Activated CD4-positive, alpha-beta T cell treated with anti-CD3 and anti-CD28 coated beads, Interleukin-2, amount 10 ng/mL, durations not matched to agents 24 days and 14 days (primary cell): ENCODE measurements at regions of chr9 and their contacts with region 1.

Region 1: GRCh38 chr9:2638871-2639673 is 17.5 kb downstream of the VLDLR start:
- DNase-seq: no peak
- H3K4me3 Mint-ChIP-seq: no peak overlapping the region
- H3K27ac Mint-ChIP-seq: peak overlapping the region; percentile 79
- H3K4me1 Mint-ChIP-seq: peaks cover 12% of the 10 kb centered on the region
- H3K27me3 Mint-ChIP-seq: no peaks in the 10 kb centered on the region

Region 2: GRCh38 chr9:2655411-2655901 is 16.4 kb after region 1 on chr9:
- intact Hi-C with region 1: loop called (anchors 1 kb)
- DNase-seq: peak; percentile 83
- H3K4me3 Mint-ChIP-seq: peak overlapping the region; percentile 53
- H3K27ac Mint-ChIP-seq: peak overlapping the region; percentile 94
- H3K4me1 Mint-ChIP-seq: peaks cover 20% of the 10 kb centered on the region
- H3K27me3 Mint-ChIP-seq: no peaks in the 10 kb centered on the region

Region 3: DNA sequence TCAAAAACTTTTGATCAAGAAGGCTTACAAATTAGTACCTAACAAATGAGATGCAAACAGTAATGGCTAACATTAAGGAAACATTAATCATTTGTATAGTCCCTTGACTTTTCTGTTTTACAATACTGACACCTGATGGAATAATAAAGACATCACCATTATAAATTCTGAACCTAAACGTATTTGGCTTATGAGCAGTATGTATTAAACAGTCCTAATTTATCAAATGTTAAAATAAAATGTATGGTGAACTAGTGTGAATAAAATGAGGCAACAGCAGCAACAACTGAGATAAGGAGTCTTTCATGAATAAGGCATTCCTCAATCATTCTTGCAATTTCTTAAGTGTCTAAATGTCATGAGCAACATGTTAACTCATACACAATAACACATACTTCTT is 198.8 kb after region 1 on chr9:
- intact Hi-C with region 1: loop called (anchors 5 kb)
- DNase-seq: no peak
- H3K4me3 Mint-ChIP-seq: no peak overlapping the region
- H3K27ac Mint-ChIP-seq: no peak overlapping the region
- H3K4me1 Mint-ChIP-seq: peaks cover 32% of the 10 kb centered on the region
- H3K27me3 Mint-ChIP-seq: no peaks in the 10 kb centered on the region